GM23248 (cell line): ENCODE measurements at regions of chr10 and their contacts with region 1.

Region 1: GRCh38 chr10:70880077-70880534 is 8.3 kb downstream of the PCBD1 start:
- DNase-seq: peak; percentile 82
- H3K4me3 ChIP-seq: no peak overlapping the region
- H3K27ac ChIP-seq: no peak overlapping the region
- H3K4me1 ChIP-seq: no peaks in the 10 kb centered on the region
- H3K27me3 ChIP-seq: no peaks in the 10 kb centered on the region

Region 2: DNA sequence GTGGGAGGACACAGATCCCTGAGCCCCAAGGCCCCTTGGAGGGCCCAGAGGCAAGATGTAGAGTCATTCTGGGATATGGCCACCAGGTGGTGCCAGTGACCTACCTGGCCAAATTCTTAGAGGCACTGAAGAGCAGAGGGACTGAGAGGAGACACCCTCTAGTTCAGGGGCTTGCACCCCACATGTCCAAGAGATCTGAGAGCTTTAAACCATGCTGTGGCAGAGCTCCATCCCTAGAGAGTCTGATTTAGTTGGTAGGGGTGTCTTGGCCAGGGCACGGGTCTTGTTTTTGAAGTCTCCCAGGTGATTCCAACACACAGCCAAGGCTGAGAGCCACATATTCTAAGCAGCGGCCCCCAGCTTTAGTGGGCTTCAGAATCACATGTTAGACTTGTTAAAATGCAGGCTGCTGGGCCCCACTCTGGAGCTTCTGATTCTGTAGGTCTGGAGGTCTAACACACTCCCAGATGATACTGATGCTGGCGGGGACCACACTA is 330.1 kb before region 1 on chr10:
- in situ Hi-C with region 1: loop called (anchors 10 kb)
- DNase-seq: peak; percentile 68
- H3K4me3 ChIP-seq: no peak overlapping the region
- H3K27ac ChIP-seq: no peak overlapping the region
- H3K4me1 ChIP-seq: no peaks in the 10 kb centered on the region
- H3K27me3 ChIP-seq: no peaks in the 10 kb centered on the region

Region 3: GRCh38 chr10:70812814-70813213 is 67.3 kb before region 1 on chr10:
- in situ Hi-C with region 1: loop called (anchors 5 kb)
- DNase-seq: no peak
- H3K4me3 ChIP-seq: no peak overlapping the region
- H3K27ac ChIP-seq: no peak overlapping the region
- H3K4me1 ChIP-seq: peaks cover 21% of the 10 kb centered on the region
- H3K27me3 ChIP-seq: no peaks in the 10 kb centered on the region

Region 4: GRCh38 chr10:71531485-71532446 is 651.7 kb after region 1 on chr10:
- in situ Hi-C with region 1: no loop called
- DNase-seq: peak; percentile 13
- H3K4me3 ChIP-seq: no peak overlapping the region
- H3K27ac ChIP-seq: no peak overlapping the region
- H3K4me1 ChIP-seq: no peaks in the 10 kb centered on the region
- H3K27me3 ChIP-seq: no peaks in the 10 kb centered on the region